ENCODE measurements at regions of chr5 and their contacts with region 1.

Region 1: GRCh38 chr5:134296213-134296612 is 70.3 kb upstream of the PPP2CA start:
- DNase-seq: no peak
- H3K4me3 ChIP-seq: no peak overlapping the region
- H3K27ac ChIP-seq: no peak overlapping the region
- H3K27me3 ChIP-seq: no peaks in the 10 kb centered on the region
- CTCF ChIP-seq: no peak

Region 2: GRCh38 chr5:134145779-134146581 is 150.2 kb before region 1 on chr5:
- intact Hi-C with region 1: no loop called
- DNase-seq: peak; percentile 75 to 90 (median 86)
- H3K4me3 ChIP-seq: no peak overlapping the region
- H3K27ac ChIP-seq: peak overlapping the region in 32 of 59 donors; percentile 7 to 66 (median 41)
- H3K27me3 ChIP-seq: no peaks in the 10 kb centered on the region
- CTCF ChIP-seq: peak; percentile 75 to 99 (median 96)

Region 3: GRCh38 chr5:134176511-134177368 is 119.5 kb before region 1 on chr5 and contains the start of gene SKP1:
- intact Hi-C with region 1: no loop called
- DNase-seq: peak; percentile 66 to 89 (median 78)
- H3K4me3 ChIP-seq: peak within 1 kb of the TSS; percentile 58 to 99 (median 93)
- H3K27ac ChIP-seq: peak within 1 kb of the TSS; percentile 82 to 100 (median 98)
- H3K27me3 ChIP-seq: no peaks in the 10 kb centered on the region
- CTCF ChIP-seq: peak in 15 of 56 donors; percentile 11 to 51 (median 23)
- total RNA-seq, gene SKP1: 263 to 693 (median 535) TPM

Region 4: DNA sequence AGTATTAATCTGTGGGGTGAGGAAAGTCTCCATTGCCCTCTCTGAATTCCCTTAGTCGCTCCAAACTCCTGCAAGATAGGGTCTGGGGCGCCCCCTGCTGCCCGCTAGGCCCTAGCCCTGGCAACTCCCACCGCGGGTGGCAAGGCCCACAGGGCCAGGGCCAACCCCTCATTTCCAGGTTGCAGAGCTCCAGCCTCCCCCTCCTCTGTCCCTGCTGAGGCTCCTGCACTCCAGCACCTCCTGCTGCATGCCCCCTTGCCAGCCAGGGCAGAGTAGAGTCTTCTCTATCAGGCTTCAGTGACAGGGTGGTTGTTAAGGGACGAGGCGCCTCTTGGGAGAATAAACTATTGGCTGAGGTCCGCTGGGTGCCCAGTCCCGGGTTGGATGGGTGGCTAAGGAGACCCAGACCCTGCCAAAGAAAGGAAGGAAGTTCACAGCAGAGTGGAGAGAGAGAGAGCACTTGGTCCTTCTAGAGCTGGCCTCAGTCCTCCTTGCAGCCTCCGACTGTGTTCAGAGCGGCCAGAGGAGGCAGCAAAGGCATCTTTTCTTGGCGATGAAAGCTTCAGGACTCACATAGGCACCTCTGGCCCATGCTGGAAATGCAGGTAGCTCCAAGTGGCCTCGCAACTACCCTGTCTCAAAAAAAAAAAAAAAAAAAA is 290.8 kb after region 1 on chr5:
- intact Hi-C with region 1: loop called in 1 of 2 experiments (anchors 5 kb)
- DNase-seq: peak in 9 of 10 donors; percentile 61 to 85 (median 74)
- H3K4me3 ChIP-seq: peak overlapping the region in 13 of 59 donors; percentile 3 to 43 (median 23)
- H3K27ac ChIP-seq: peak overlapping the region in 8 of 59 donors; percentile 10 to 63 (median 27)
- H3K27me3 ChIP-seq: no peaks in the 10 kb centered on the region
- CTCF ChIP-seq: peak; percentile 38 to 92 (median 73)